ENCODE measurements at regions of chr17 and their contacts with region 1.

Region 1: GRCh38 chr17:59676716-59677115 is 30.5 kb downstream of the PTRH2 start:
- DNase-seq: no peak
- ATAC-seq: no peak
- H3K4me3 ChIP-seq: no peak overlapping the region
- H3K27ac ChIP-seq: no peak overlapping the region
- H3K4me1 ChIP-seq: peaks cover 0 to 14% (median 0%) of the 10 kb centered on the region in 12 donors
- H3K27me3 ChIP-seq: no peaks in the 10 kb centered on the region
- CTCF ChIP-seq: no peak
- POLR2A ChIP-seq: no peak

Region 2: GRCh38 chr17:59074494-59074893 is 602.2 kb before region 1 on chr17:
- intact Hi-C with region 1: no loop called
- DNase-seq: no peak
- ATAC-seq: no peak
- H3K4me3 ChIP-seq: no peak overlapping the region
- H3K27ac ChIP-seq: no peak overlapping the region
- H3K4me1 ChIP-seq: no peaks in the 10 kb centered on the region
- H3K27me3 ChIP-seq: no peaks in the 10 kb centered on the region
- CTCF ChIP-seq: no peak
- POLR2A ChIP-seq: no peak

Region 3: DNA sequence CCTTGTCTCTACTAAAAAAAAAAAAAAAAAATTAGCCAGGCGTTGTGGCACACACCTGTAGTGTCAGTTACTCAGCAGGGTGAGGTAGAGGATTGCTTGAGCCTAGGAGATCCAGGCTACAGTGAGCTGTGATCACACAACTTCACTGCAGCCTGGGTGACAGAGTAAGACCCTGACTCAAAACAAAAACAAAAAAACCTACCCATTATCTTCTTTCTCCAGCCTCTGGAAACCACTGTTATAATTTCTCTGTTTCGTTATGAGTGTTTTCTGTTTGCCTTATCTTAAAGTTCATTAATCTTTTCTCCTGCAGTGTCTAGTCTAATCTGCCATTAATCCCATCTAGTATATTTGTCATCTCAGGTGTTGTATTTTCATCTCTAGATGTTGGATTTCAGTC is 75.6 kb before region 1 on chr17:
- intact Hi-C with region 1: loop called in 1 of 10 experiments (anchors 5 kb)
- DNase-seq: no peak
- ATAC-seq: no peak
- H3K4me3 ChIP-seq: no peak overlapping the region
- H3K27ac ChIP-seq: no peak overlapping the region
- H3K4me1 ChIP-seq: no peaks in the 10 kb centered on the region
- H3K27me3 ChIP-seq: no peaks in the 10 kb centered on the region
- CTCF ChIP-seq: no peak
- POLR2A ChIP-seq: no peak

Region 4: DNA sequence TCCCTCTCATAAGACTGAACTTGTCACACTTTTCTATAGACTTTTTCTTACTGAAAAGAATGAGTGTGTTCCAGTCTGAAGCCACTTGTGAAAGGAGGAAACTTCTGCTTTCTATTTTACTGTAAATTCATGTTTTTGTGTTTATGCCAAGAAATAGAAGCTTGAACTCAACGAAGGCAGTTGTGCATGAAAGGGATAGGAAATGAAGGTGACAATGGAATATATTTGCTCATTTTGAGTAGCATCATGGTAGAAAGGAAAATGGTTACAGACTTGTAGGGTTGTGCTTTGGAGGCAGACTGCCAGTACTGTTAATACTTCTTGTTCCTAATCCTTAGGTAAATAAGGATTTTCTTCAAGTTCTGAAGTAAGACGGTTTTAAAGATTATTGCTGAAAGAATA is 48.9 kb before region 1 on chr17:
- intact Hi-C with region 1: no loop called
- DNase-seq: no peak
- ATAC-seq: peak in 1 of 4 donors; percentile 16
- H3K4me3 ChIP-seq: no peak overlapping the region
- H3K27ac ChIP-seq: peak overlapping the region in 2 of 12 donors; percentile 21 to 73
- H3K4me1 ChIP-seq: peaks cover 13 to 100% (median 69%) of the 10 kb centered on the region in 12 donors
- H3K27me3 ChIP-seq: no peaks in the 10 kb centered on the region
- CTCF ChIP-seq: no peak
- POLR2A ChIP-seq: no peak

Region 5: DNA sequence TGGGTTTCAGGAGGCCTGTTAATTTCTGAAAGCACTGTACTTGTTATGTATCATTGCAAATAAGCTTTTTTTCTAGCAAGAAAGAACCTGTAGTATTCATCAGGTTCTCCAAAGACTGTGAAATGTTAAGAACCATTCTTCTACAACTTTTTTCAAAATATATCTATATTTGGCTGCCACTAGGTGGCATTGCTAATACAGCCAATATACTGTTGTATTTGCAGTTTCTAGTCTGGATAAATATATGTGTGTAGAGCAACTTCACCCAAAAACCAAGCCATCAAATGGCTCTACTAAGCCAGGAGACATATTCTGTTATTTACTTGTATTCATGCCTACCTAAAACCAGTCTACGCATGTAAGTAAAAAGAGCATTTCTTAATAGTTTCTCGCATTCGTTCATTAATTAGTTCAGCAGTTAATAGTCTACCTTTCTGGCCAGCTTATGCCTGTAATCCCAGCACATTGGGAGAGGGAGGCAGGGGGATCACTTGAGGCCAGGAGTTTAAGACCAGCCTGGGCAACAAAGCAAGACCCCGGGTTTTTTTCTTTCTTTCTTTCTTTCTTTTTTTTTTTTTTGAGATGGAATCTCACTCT is 70.2 kb after region 1 on chr17:
- intact Hi-C with region 1: loop called in 1 of 10 experiments (anchors 10 kb)
- DNase-seq: no peak
- ATAC-seq: peak in 1 of 4 donors; percentile 41
- H3K4me3 ChIP-seq: no peak overlapping the region
- H3K27ac ChIP-seq: no peak overlapping the region
- H3K4me1 ChIP-seq: peaks cover 0 to 15% (median 0%) of the 10 kb centered on the region in 12 donors
- H3K27me3 ChIP-seq: no peaks in the 10 kb centered on the region
- CTCF ChIP-seq: peak; percentile 35 to 74 (median 60)
- POLR2A ChIP-seq: no peak

Region 6: DNA sequence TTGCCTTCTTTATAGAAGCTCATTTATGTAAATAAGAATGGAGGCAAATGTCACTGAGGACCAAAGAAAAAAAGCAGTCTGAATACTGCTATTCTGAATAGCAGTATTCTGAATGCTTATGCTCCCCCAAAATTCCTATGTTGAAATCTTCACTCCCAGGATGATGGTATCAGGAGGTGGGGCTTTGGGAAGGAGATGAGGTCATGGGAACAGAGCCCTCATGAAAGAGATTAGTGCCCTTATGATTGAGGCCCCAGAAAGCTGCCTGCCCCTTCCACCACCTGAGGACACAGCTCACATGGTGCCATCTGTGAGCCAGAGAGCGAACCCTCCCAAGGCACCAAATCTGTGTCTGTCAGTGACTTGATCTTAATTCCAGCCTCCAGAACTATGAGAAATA is 373.2 kb after region 1 on chr17:
- intact Hi-C with region 1: loop called in 1 of 10 experiments (anchors 10 kb)
- DNase-seq: no peak
- ATAC-seq: no peak
- H3K4me3 ChIP-seq: no peak overlapping the region
- H3K27ac ChIP-seq: no peak overlapping the region
- H3K4me1 ChIP-seq: no peaks in the 10 kb centered on the region
- H3K27me3 ChIP-seq: no peaks in the 10 kb centered on the region
- CTCF ChIP-seq: no peak
- POLR2A ChIP-seq: no peak

Measured in heart left ventricle (tissue), 16 donors.